ENCODE measurements at regions of chr1 and their contacts with region 1.

Region 1: DNA sequence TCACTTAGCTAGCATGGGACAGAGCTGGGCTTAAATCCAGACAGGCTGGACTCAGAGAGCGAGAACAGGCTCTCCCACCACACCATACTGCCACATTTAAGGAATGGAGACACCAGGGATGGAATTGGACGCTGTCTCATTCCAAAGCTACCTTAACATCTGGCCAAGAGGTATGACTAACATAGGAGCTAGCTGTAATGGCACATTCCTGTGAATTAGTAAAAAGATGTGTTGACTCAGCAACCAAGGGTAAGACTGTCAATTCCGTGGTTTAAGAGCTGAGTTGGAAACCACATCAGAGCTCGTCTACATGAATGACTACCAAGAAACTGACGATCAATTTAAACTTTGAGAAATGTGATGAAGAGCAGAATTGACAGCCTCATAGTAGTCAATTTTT is 8.3 kb upstream of the TNFRSF9 start:
- DNase-seq: peak in 8 of 14 experiments; percentile 7 to 84 (median 26)
- ATAC-seq: peak; percentile 81
- H3K4me3 ChIP-seq: no peak overlapping the region
- H3K4me3 Mint-ChIP-seq: peak overlapping the region; percentile 14
- H3K27ac ChIP-seq: no peak overlapping the region
- H3K27ac Mint-ChIP-seq: peak overlapping the region; percentile 37
- H3K4me1 ChIP-seq: peaks cover 18% of the 10 kb centered on the region
- H3K4me1 Mint-ChIP-seq: peaks cover 26% of the 10 kb centered on the region
- H3K27me3 ChIP-seq: no peaks in the 10 kb centered on the region
- H3K27me3 Mint-ChIP-seq: no peaks in the 10 kb centered on the region
- CTCF ChIP-seq: no peak

Region 2: GRCh38 chr1:7902478-7903085 is 46.4 kb before region 1 on chr1:
- CTCF ChIA-PET with region 1: no interaction called
- POLR2A ChIA-PET with region 1: no interaction called
- intact Hi-C with region 1: no loop called
- DNase-seq: peak; percentile 20 to 84 (median 38)
- ATAC-seq: peak; percentile 65
- H3K4me3 ChIP-seq: peak overlapping the region; percentile 42
- H3K4me3 Mint-ChIP-seq: peak overlapping the region; percentile 70
- H3K27ac ChIP-seq: no peak overlapping the region
- H3K27ac Mint-ChIP-seq: no peak overlapping the region
- H3K4me1 ChIP-seq: peaks cover 11% of the 10 kb centered on the region
- H3K4me1 Mint-ChIP-seq: no peaks in the 10 kb centered on the region
- H3K27me3 ChIP-seq: no peaks in the 10 kb centered on the region
- H3K27me3 Mint-ChIP-seq: no peaks in the 10 kb centered on the region
- CTCF ChIP-seq: peak; percentile 70

Region 3: DNA sequence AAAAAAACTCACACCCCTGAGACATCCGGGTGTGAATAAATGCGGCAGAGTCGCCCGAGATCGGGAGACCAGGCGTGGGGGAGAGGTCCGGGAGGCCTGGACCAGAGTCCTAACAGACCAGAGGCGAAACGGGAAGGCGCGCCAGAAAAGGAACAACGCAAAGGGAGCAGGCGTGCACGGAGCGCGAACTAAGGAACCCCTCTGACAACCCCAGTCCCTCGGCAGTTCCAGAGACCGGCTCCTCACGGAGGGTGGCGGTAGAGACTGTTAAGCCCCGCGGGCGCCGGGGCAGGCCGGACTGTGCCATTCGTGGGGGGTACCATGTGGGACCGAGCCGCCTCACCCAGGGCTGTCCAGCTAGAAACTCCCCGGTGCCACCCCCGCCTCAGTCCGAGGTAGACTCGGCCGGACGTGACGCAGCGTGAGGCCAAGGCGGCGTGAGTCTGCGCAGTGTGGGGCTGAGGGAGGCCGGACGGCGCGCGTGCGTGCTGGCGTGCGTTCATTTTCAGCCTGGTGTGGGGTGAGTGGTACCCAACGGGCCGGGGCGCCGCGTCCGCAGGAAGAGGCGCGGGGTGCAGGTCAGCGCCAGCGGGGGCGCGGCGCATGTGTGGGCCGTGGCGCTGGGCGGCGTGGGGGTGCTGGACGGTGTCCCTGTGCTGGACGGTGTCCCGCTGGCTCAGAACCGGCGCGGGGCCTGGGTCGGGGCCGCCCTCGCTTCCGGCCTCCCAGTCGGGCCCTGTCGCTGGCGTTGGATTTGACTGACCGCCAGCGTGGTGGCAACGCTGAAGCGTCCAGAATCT is 12.5 kb after region 1 on chr1 and contains the start of gene PARK7:
- CTCF ChIA-PET with region 1: interaction called, 3 read pairs
- POLR2A ChIA-PET with region 1: interaction called, 13 read pairs
- intact Hi-C with region 1: no loop called
- DNase-seq: peak; percentile 99 to 100 (median 100)
- ATAC-seq: peak; percentile 95
- H3K4me3 ChIP-seq: peak within 1 kb of the TSS; percentile 84
- H3K4me3 Mint-ChIP-seq: peak within 1 kb of the TSS; percentile 99
- H3K27ac ChIP-seq: peak within 1 kb of the TSS; percentile 88 to 94
- H3K27ac Mint-ChIP-seq: peak within 1 kb of the TSS; percentile 98
- H3K4me1 ChIP-seq: peaks cover 56% of the 10 kb centered on the region
- H3K4me1 Mint-ChIP-seq: peaks cover 78% of the 10 kb centered on the region
- H3K27me3 ChIP-seq: no peaks in the 10 kb centered on the region
- H3K27me3 Mint-ChIP-seq: no peaks in the 10 kb centered on the region
- CTCF ChIP-seq: peak; percentile 57
- total RNA-seq, gene PARK7: 57.7 to 62.4 TPM